Head of caudate nucleus (tissue), 42 donors: ENCODE measurements at regions of chr7 and their contacts with region 1.

Region 1: DNA sequence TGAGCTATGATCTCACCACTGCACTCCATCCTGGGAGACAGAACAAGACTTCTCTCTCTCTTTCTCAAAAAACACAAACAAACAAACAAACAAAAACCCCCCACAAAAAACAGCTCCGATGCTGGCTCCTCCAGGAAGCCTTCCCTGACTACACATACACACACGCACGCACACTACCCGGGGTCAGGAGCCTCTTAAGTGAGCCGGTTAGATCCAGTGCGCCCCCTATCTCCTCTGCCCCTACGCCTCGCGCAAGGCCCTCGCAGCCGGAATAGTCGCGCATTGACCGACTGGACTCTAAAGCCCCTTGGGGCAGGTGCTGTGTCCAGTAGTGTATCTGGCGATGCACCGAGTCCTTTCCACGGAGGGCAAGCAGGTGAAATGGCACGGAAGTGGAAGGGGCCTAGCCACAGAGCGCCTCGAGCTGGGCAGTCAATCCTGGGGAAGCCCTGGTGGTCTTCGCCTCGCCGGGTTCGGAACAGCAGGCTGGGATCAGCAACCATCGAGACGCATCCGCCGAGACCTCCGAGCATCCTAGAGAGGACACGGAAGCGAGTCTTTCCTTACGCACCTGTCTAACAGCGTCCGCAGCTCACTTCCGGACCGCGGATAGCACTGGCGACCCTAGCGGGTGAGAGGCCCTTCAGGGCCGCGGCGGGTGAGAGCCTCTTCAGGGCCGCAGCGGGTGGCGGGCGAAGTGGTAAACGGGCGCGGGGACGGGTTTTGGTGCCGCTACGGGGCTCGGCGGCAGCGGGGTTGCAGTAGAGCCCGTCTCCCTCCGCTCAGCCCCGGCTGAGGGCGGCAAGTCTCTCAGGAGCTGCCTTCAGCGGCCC is at the start of gene ZSCAN25:
- DNase-seq: peak; percentile 80 to 96 (median 90)

Region 2: DNA sequence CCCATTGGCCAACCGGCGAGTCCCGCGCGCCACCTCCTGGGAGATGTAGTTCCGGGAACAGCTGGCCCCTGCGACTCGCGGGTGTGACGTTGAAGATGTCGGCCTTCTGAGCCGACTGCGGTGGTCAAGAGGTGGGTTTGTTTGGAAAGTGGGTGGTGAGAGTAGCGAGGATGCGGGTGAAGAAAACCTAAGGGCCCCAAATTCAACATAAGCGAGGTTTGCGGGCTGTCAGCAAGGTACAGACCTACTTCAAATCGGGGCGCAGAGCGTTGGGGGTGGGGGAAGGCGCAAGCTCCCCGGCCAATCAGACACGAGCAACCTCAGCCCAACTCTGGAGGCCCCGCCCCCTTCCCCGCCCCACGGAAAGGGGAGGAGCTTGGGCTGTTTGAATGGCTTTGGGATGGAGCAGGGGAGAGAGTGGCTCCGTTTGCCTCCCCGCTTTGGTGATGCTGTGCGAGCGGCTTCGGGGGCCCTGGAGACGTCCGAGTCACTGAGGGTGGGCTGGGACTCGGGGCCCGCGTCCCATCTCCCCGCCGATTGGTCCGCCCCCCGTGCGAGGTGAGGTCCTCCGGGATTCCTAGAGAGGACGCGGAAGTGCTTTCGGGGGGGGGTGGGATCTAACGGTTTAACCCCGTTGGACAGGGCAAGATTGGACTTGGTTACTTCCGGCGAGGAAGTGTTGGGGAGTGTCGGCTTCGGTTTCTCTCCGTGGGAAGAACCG is 111.8 kb before region 1 on chr7 and contains the start of gene ZKSCAN5:
- intact Hi-C with region 1: loop called (anchors 10 kb)
- DNase-seq: peak; percentile 96 to 100 (median 99)

Region 3: GRCh38 chr7:99558306-99559174 is 58.0 kb before region 1 on chr7 and contains the start of gene ZNF655:
- intact Hi-C with region 1: loop called (anchors 5 kb)
- DNase-seq: peak; percentile 73 to 97 (median 89)